Dendritic cell treated with granulocyte-macrophage colony-stimulating factor and Interleukin-4, amounts not matched to agents 40 ng/mL and 50 ng/mL, for 4 days (primary cell): ENCODE measurements at regions of chr5 and their contacts with region 1.

Region 1: DNA sequence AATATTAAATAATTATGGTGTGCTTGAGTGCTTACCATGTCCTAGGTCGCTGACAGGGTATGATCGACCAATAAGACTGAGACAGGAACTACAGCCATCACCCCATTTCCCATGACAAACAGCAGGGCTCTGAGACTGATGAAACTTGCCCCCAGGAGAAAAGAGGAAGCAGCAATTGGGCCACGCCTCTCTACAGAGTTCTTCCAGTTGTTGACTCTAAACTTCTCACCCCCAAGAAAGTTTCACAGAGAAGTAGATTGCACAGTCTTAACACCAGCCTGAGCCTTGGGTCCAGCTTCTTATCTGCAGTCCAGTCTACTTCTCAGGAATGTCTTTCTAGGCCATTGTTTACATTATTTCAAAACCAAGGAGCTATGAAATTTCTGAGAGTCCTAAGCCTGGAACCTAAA is 182.2 kb upstream of the ANKRD55 start:
- H3K4me3 Mint-ChIP-seq: peak overlapping the region; percentile 59
- H3K27ac Mint-ChIP-seq: peak overlapping the region; percentile 94
- H3K4me1 Mint-ChIP-seq: peaks cover 72% of the 10 kb centered on the region
- H3K27me3 Mint-ChIP-seq: no peaks in the 10 kb centered on the region

Region 2: GRCh38 chr5:56460679-56461191 is 45.4 kb after region 1 on chr5:
- intact Hi-C with region 1: loop called (anchors 2 kb)
- H3K4me3 Mint-ChIP-seq: no peak overlapping the region
- H3K27ac Mint-ChIP-seq: no peak overlapping the region
- H3K4me1 Mint-ChIP-seq: peaks cover 30% of the 10 kb centered on the region
- H3K27me3 Mint-ChIP-seq: no peaks in the 10 kb centered on the region

Region 3: GRCh38 chr5:56686337-56687195 is 271.2 kb after region 1 on chr5:
- intact Hi-C with region 1: loop called (anchors 10 kb)
- H3K4me3 Mint-ChIP-seq: peak overlapping the region; percentile 17
- H3K27ac Mint-ChIP-seq: peak overlapping the region; percentile 67
- H3K4me1 Mint-ChIP-seq: peaks cover 63% of the 10 kb centered on the region
- H3K27me3 Mint-ChIP-seq: no peaks in the 10 kb centered on the region

Region 4: GRCh38 chr5:56791396-56791795 is 376.0 kb after region 1 on chr5:
- intact Hi-C with region 1: no loop called
- H3K4me3 Mint-ChIP-seq: no peak overlapping the region
- H3K27ac Mint-ChIP-seq: no peak overlapping the region
- H3K4me1 Mint-ChIP-seq: no peaks in the 10 kb centered on the region
- H3K27me3 Mint-ChIP-seq: no peaks in the 10 kb centered on the region

Region 5: DNA sequence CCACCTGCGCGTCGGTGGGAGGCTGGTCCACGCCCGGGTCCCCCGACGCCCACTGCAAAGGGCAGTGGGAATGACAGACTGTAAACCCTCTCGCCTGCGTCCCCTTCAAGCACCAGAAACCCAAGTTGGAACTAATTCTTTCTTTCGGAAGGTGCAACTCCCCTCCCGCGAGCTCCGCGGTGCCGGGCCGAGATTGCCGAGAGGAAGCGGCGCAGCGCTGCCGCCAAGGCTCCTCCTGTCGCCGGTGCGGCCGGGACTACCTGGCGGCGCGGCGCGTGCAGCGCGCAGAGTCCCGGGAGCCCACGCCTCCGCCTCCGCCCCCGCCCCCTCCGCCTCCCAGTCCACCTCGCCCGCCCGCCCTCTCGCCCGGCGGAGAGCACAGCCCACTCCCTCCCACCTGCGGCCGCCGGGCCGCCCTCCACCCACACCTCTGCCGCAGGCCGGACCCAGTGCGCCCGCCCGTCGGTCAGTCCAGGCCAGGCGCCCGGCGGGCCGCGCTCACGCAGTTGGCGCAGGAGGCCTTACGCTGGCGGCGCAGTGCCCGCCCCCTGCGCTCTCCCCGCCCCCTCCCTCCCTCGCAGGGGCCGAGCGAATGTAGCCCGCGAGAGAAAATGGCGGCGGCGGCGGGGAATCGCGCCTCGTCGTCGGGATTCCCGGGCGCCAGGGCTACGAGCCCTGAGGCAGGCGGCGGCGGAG is 399.8 kb after region 1 on chr5 and contains the start of gene MAP3K1:
- intact Hi-C with region 1: loop called (anchors 5 kb)
- H3K4me3 Mint-ChIP-seq: peak within 1 kb of the TSS; percentile 96
- H3K27ac Mint-ChIP-seq: peak within 1 kb of the TSS; percentile 96
- H3K4me1 Mint-ChIP-seq: peaks cover 31% of the 10 kb centered on the region
- H3K27me3 Mint-ChIP-seq: no peaks in the 10 kb centered on the region